Heart left ventricle (tissue), 16 donors: ENCODE measurements at regions of chr9 and their contacts with region 1.

Region 1: DNA sequence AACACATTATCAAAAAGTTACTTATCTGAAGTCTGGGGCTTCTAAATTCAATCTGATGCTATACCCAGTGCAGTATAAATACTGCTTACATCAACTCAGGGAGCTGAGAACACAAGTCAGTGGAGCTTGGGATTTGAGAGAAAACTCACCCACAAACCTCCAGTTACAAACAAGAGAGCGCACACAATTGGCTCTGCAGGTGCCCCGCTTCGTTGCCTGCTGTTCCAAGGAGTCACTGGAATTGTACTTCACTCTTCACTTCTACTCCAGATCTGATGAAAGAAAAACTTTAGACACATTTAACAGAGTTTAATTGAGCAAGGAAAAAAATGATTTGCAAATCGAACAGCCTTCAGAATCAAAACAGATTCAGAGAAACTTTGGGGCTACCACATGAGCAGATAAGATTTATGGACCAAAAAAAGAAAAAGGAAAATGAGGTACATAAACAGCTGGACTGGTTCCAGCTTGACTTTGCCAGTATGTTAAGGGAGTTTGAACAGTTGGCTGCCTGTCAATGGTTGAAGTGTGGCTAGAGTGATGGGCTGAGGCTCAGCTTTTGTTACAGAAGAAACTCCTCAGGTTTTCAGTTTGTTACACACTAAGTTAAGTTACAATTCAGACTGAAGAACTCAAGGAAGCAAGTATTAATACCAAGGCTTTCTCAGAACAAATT is 156.6 kb downstream of the AOPEP start:
- DNase-seq: peak in 1 of 5 donors; percentile 42
- ATAC-seq: peak in 1 of 4 donors; percentile 52
- H3K4me3 ChIP-seq: no peak overlapping the region
- H3K27ac ChIP-seq: peak overlapping the region in 11 of 12 donors; percentile 8 to 75 (median 52)
- H3K4me1 ChIP-seq: peaks cover 4 to 58% (median 33%) of the 10 kb centered on the region in 12 donors
- H3K27me3 ChIP-seq: no peaks in the 10 kb centered on the region
- CTCF ChIP-seq: no peak
- POLR2A ChIP-seq: no peak

Region 2: GRCh38 chr9:94952565-94953373 is 69.7 kb after region 1 on chr9:
- intact Hi-C with region 1: loop called in 2 of 10 experiments (anchors 5 to 10 kb)
- DNase-seq: peak in 2 of 5 donors; percentile 46 to 65
- ATAC-seq: peak; percentile 23 to 77 (median 56)
- H3K4me3 ChIP-seq: peak overlapping the region in 3 of 12 donors; percentile 1 to 15 (median 2)
- H3K27ac ChIP-seq: peak overlapping the region; percentile 43 to 88 (median 74)
- H3K4me1 ChIP-seq: peaks cover 10 to 56% (median 47%) of the 10 kb centered on the region in 12 donors
- H3K27me3 ChIP-seq: no peaks in the 10 kb centered on the region
- CTCF ChIP-seq: no peak
- POLR2A ChIP-seq: no peak